ENCODE measurements at regions of chr6 and their contacts with region 1.

Region 1: DNA sequence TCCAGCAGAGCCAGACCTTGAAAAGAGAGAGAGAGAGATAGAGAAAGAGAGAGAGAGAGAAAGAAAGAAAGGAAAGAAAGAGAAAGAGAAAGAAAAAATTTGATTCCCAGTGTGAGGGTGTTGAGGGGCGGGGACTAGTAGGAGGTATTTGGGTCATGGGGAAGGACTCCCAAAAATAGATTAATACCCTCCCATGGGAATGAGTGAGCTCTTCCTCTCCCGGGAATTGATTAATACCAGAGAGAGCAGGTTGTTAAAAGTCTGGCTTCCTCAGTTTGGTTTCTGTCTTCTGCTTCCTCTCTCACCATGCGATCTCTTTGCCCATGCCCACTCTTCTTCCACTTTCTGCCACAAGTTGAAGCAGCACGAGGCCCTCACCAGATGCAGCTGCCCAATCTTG is 28.8 kb upstream of the CFAP206 start:
- DNase-seq: no peak
- H3K4me3 ChIP-seq: no peak overlapping the region
- H3K27ac ChIP-seq: no peak overlapping the region
- H3K4me1 ChIP-seq: peaks cover 10% of the 10 kb centered on the region
- H3K27me3 ChIP-seq: no peaks in the 10 kb centered on the region
- CTCF ChIP-seq: no peak

Region 2: GRCh38 chr6:87139236-87139635 is 239.7 kb before region 1 on chr6:
- CTCF ChIA-PET with region 1: interaction called, 8 read pairs
- dilution Hi-C with region 1: no loop called
- in situ Hi-C with region 1: loop called (anchors 25 kb)
- intact Hi-C with region 1: loop called (anchors 5 kb)
- DNase-seq: peak; percentile 40
- H3K4me3 ChIP-seq: no peak overlapping the region
- H3K27ac ChIP-seq: no peak overlapping the region
- H3K4me1 ChIP-seq: no peaks in the 10 kb centered on the region
- H3K27me3 ChIP-seq: no peaks in the 10 kb centered on the region
- CTCF ChIP-seq: peak; percentile 70 to 76

Region 3: GRCh38 chr6:87291883-87292282 is 87.1 kb before region 1 on chr6:
- CTCF ChIA-PET with region 1: no interaction called
- dilution Hi-C with region 1: no loop called
- in situ Hi-C with region 1: no loop called
- intact Hi-C with region 1: no loop called
- DNase-seq: no peak
- H3K4me3 ChIP-seq: no peak overlapping the region
- H3K27ac ChIP-seq: no peak overlapping the region
- H3K4me1 ChIP-seq: peaks cover 6% of the 10 kb centered on the region
- H3K27me3 ChIP-seq: no peaks in the 10 kb centered on the region
- CTCF ChIP-seq: no peak

Region 4: GRCh38 chr6:87308970-87309369 is 70.0 kb before region 1 on chr6:
- CTCF ChIA-PET with region 1: no interaction called
- dilution Hi-C with region 1: no loop called
- in situ Hi-C with region 1: no loop called
- intact Hi-C with region 1: no loop called
- DNase-seq: peak; percentile 66
- H3K4me3 ChIP-seq: no peak overlapping the region
- H3K27ac ChIP-seq: no peak overlapping the region
- H3K4me1 ChIP-seq: no peaks in the 10 kb centered on the region
- H3K27me3 ChIP-seq: peaks cover 6% of the 10 kb centered on the region
- CTCF ChIP-seq: no peak

Region 5: DNA sequence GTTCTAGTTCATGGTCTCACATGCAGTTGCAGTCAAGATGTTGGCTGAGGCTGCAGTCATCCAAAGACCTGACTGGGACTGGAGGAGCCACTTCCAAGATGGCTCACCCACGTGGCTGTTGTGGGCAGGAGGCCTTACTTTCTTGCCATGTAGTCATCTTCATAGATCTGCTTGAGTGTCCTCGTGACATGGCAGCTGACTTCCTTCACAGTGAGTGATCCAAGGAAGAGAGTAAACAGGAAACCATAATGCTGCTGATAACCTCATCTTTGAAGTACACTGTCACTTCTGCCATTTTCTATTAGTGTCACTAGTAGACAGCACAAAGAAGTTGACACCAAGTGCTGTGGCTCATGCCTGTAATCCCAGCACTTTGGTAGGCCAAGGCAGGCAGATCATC is 363.2 kb after region 1 on chr6:
- CTCF ChIA-PET with region 1: no interaction called
- dilution Hi-C with region 1: no loop called
- in situ Hi-C with region 1: no loop called
- intact Hi-C with region 1: no loop called
- DNase-seq: no peak
- H3K4me3 ChIP-seq: no peak overlapping the region
- H3K27ac ChIP-seq: no peak overlapping the region
- H3K4me1 ChIP-seq: peaks cover 5% of the 10 kb centered on the region
- H3K27me3 ChIP-seq: no peaks in the 10 kb centered on the region
- CTCF ChIP-seq: no peak

Measured in mammary epithelial cell (primary cell).